ENCODE measurements at regions of chr1 and their contacts with region 1.

Region 1: GRCh38 chr1:116671912-116672311 is 4.4 kb upstream of the IGSF3 start:
- DNase-seq: no peak
- H3K4me3 Mint-ChIP-seq: no peak overlapping the region
- H3K27ac Mint-ChIP-seq: no peak overlapping the region
- H3K4me1 Mint-ChIP-seq: peaks cover 4% of the 10 kb centered on the region
- H3K27me3 Mint-ChIP-seq: peaks cover 45% of the 10 kb centered on the region

Region 2: DNA sequence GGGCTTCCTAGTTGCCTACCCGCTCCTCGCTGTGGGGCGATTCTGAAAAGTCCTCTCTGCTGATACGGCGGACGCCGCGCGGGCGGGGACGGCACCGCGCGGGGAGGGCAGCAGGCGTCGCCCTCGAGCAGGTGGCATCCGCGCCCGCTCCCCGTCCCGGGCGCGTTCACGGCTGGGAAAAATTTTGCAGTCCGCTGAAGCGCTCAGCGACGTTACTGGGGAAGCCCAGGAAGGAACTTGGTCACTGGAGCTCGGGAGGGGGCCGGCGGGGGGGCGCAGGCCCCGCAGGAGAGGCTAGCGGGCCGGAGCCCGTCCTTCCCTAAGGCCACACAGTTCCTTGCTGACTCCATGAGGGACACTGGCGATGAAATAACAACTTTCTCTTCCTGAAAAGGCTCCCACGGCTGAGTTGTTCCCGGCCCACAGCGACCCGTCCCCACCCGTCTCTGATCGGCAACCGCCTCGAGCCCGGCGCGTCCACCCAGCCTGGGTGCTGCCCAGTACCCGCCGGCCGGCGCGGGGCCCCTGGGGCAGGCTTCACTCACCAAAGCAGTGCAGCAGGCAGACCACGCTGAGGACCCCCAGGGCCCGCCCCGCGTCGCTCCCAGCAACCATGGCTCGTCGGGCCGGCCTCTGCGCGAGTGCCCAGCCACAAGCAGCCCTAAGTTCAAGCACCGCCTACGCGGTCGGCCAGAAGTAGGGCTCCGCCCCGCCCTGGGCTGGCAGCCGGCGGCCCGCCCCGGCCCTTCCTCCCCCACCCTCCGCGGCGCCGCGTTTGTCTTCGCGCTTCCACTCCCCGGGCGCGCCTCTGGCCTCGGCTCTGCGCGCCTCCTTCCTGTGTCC is 101.3 kb before region 1 on chr1 and contains the start of gene CD58:
- CTCF ChIA-PET with region 1: interaction called, 20 read pairs
- POLR2A ChIA-PET with region 1: no interaction called
- DNase-seq: peak; percentile 89
- H3K4me3 Mint-ChIP-seq: peak within 1 kb of the TSS; percentile 89
- H3K27ac Mint-ChIP-seq: peak within 1 kb of the TSS; percentile 85
- H3K4me1 Mint-ChIP-seq: peaks cover 66% of the 10 kb centered on the region
- H3K27me3 Mint-ChIP-seq: no peaks in the 10 kb centered on the region
- total RNA-seq, gene CD58: 55.2 to 59.7 TPM